ENCODE measurements at regions of chr5 and their contacts with region 1.

Region 1: DNA sequence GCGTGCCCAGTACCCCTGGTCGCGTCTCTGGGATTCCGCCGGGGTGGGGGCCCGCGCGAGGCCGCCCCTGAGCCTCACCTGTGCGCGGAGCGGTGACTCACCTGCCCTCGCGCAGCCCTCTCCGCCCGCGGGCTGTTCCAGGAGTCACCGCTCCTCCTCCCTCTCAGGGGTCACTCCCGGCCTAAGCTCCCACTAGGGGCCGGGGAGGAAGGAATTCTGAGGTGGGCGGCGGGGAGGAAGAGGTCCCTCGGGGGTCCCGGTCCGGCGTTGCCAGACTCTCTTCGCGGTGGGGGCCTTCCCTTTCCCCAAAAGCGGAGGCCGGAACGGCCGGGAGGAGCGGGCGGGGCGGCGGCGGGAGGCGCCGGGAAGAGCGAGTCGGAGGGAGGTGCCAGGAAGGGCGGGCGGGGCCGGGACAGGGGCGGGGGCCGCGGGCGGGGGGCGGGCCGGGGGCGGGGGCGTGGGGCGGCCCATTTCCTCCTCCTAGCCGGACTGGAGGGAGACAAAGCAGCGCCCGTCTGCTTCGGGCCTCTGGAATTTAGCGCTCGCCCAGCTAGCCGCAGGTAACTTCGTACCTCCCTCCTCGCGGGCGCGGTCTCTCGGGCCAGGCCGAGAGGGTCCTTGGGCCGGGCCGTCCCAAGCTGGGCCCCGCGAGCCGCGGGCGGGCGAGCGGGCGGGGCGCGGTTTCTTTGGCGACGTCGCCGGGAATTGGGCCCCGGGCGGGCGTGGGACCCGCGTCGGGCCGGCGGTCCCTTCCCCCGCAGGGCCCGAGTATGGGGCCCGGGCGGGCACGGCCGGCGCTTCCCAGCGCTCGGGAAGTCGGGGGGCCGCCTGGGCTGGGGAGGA is at the start of gene CTNNA1:
- DNase-seq: peak; percentile 92
- total RNA-seq, gene CTNNA1: 361 to 439 TPM

Region 2: DNA sequence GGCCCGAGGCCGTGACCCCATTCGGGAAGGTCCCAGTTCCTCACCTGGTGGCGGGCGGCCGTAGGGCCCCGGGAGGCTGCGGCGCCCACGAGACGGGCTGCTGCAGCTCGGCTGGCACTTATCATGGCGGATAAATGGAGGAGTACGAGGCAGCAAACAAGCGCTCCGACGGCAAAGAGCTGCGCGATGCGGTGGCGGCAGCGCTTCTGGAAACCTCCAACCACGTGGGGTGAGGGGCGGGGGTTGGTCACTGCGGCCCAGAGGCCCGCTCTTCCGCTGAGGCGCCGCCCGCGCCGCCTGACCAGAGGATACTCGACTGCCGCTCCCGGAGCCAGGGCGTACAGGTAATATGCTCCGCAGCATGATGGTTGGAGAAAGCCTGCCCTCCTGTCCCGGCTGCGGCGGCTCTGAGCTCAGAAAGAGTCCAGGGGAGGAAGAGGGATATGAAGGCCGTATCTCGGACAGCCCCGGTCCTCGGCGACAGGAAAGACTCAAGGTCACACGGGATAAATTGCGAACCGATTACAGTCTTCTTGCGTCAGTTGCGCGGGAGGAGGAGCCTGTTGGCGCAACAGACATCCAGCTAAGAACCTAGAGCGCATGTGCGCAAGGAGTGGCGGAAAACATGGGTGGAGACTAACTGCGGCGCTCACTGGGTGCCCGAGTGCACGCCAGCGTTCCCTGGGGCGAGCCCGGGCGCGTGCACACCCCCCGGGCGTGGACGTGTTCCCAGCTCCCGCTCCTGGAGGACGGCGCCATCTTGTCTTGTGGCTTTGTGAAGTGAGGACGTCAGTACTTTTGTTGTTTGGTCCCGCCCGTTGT is 177.8 kb before region 1 on chr5 and contains the start of gene HSPA9:
- intact Hi-C with region 1: loop called in 1 of 2 experiments (anchors 10 kb)
- DNase-seq: peak; percentile 99
- total RNA-seq, gene HSPA9: 141 to 160 TPM

Measured in posterior vena cava (tissue), 2 donors.